ENCODE measurements at regions of chr9 and their contacts with region 1.

Region 1: GRCh38 chr9:114155263-114155972 is at the start of gene COL27A1:
- DNase-seq: peak in 1 of 2 experiments; percentile 82
- H3K4me3 ChIP-seq: peak within 1 kb of the TSS; percentile 57
- H3K27ac ChIP-seq: no peak within 1 kb of the TSS
- H3K4me1 ChIP-seq: no peaks in the 10 kb centered on the region
- H3K27me3 ChIP-seq: peaks cover 9% of the 10 kb centered on the region; the same call in 1 of the 2 replicates
- CTCF ChIP-seq: peak; percentile 90
- total RNA-seq, gene COL27A1: 0.39 and 0.83 TPM in 2 replicates

Region 2: GRCh38 chr9:114082017-114082762 is 73.2 kb before region 1 on chr9:
- CTCF ChIA-PET with region 1: no interaction called
- POLR2A ChIA-PET with region 1: no interaction called
- intact Hi-C with region 1: loop called (anchors 2 kb)
- DNase-seq: peak; percentile 64 to 81
- H3K4me3 ChIP-seq: no peak overlapping the region
- H3K27ac ChIP-seq: no peak overlapping the region
- H3K4me1 ChIP-seq: no peaks in the 10 kb centered on the region
- H3K27me3 ChIP-seq: peaks cover 44% of the 10 kb centered on the region
- CTCF ChIP-seq: peak; percentile 91

Region 3: GRCh38 chr9:114224247-114224610 is 68.8 kb after region 1 on chr9:
- CTCF ChIA-PET with region 1: no interaction called
- POLR2A ChIA-PET with region 1: no interaction called
- intact Hi-C with region 1: no loop called
- DNase-seq: no peak
- H3K4me3 ChIP-seq: no peak overlapping the region
- H3K27ac ChIP-seq: no peak overlapping the region
- H3K4me1 ChIP-seq: peaks cover 4% of the 10 kb centered on the region
- H3K27me3 ChIP-seq: no peaks in the 10 kb centered on the region
- CTCF ChIP-seq: no peak

Region 4: GRCh38 chr9:114304416-114305188 is 149.2 kb after region 1 on chr9:
- CTCF ChIA-PET with region 1: no interaction called
- POLR2A ChIA-PET with region 1: no interaction called
- intact Hi-C with region 1: loop called (anchors 1 kb)
- DNase-seq: no peak
- H3K4me3 ChIP-seq: no peak overlapping the region
- H3K27ac ChIP-seq: no peak overlapping the region
- H3K4me1 ChIP-seq: no peaks in the 10 kb centered on the region
- H3K27me3 ChIP-seq: 0 out of 2 replicates have a peak, but pooled peaks cover 8% of the 10 kb centered on the region
- CTCF ChIP-seq: no peak